WTC11 (cell line): ENCODE measurements at regions of chr1 and their contacts with region 1.

Region 1: DNA sequence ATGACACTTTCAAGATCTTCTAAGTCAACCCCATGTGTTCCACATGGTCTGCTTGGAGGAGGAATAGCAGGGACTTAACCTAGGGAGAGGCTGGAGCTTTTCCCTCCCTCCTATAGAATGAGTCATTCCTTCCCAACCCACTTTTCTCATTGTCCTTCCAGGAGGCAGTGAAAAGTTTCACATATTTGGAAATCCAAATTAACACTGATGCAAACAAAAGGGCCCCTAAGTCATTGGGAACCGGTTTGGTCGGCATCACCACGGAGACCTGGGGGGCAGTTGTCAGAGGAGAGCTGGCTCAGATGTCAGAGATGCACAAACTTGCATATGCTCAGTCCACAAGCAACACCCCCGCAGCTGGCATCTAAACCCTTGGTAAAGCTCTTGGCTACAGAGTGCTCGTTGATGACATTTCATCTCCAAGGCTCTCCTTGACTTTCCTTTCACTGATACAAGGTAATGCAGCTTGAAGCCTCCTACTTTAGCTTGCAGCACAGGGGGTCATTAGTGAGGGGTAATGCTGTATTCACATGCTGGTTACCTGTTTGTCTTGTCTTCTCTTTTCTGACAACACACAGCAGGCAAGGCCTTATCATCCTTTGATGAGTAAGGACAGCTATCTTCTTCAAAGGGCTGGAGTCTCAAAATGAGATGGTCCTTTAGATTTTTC is 12.2 kb upstream of the LRRC8D start:
- DNase-seq: peak; percentile 36
- ATAC-seq: peak; percentile 74
- H3K4me3 Mint-ChIP-seq: no peak overlapping the region
- H3K27ac Mint-ChIP-seq: no peak overlapping the region
- H3K4me1 Mint-ChIP-seq: peaks cover 22% of the 10 kb centered on the region
- H3K27me3 Mint-ChIP-seq: peaks cover 16% of the 10 kb centered on the region
- CTCF ChIP-seq: no peak

Region 2: GRCh38 chr1:89820422-89821321 is 12.1 kb after region 1 on chr1 and contains the start of gene LRRC8D:
- CTCF ChIA-PET with region 1: interaction called, 6 read pairs
- POLR2A ChIA-PET with region 1: interaction called, 17 read pairs
- DNase-seq: peak; percentile 90
- ATAC-seq: peak; percentile 92
- H3K4me3 Mint-ChIP-seq: peak within 1 kb of the TSS; percentile 90
- H3K27ac Mint-ChIP-seq: peak within 1 kb of the TSS; percentile 97
- H3K4me1 Mint-ChIP-seq: peaks cover 42% of the 10 kb centered on the region
- H3K27me3 Mint-ChIP-seq: peaks cover 6% of the 10 kb centered on the region
- CTCF ChIP-seq: no peak
- total RNA-seq, gene LRRC8D: 42.6 to 45.4 TPM (median 42.8 TPM) in 3 replicates